GM10248 (cell line): ENCODE measurements at regions of chr16 and their contacts with region 1.

Region 1: GRCh38 chr16:47037746-47038458 is 64.4 kb upstream of the DNAJA2 start:
- DNase-seq: peak; percentile 95
- CTCF ChIP-seq: peak; percentile 96

Region 2: DNA sequence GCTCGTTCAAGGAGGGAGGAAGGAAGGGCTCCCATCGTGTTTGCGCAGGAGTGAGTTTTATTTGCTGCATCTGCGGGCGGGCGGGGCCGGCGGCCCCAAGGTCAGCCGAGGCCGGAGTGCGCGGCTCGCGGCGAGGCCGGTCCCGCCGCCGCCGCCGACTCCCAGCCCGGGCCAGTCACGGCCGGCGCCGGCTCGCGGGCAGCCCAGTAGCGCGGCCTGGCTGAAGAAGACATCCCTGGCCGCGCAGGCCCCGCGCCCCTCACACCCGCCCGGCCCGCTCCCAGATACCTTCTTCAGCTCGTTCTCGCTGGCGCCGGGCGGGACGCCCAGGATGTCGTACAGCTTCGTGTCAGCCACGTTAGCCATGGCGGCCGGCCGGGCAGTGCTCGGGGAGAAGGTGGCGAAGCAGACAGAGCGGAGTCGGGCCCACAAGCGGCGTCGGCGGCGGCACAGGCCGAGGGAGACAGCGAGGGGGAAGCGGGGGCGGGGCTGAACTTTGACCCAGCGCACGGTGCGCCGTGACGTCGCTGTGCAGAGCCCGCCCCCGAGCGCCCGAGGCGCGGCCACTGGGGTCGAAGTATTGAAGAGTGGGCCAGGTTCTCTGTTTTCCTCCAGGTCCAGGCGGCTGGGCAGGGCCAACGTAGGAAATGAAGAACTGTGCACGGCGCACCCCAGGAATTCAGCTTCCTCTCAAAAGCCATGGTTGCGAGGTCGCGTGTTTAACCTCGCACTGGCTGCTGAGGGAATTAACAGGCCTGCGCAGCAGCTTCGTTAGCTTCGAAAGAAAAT is 64.5 kb before region 1 on chr16 and contains the start of gene DNAJA2:
- CTCF ChIA-PET with region 1: interaction called, 12 read pairs
- POLR2A ChIA-PET with region 1: no interaction called
- DNase-seq: peak; percentile 93
- CTCF ChIP-seq: no peak

Region 3: GRCh38 chr16:47073223-47074155 is 35.6 kb after region 1 on chr16:
- CTCF ChIA-PET with region 1: interaction called, 14 read pairs
- POLR2A ChIA-PET with region 1: no interaction called
- DNase-seq: no peak
- CTCF ChIP-seq: no peak

Region 4: DNA sequence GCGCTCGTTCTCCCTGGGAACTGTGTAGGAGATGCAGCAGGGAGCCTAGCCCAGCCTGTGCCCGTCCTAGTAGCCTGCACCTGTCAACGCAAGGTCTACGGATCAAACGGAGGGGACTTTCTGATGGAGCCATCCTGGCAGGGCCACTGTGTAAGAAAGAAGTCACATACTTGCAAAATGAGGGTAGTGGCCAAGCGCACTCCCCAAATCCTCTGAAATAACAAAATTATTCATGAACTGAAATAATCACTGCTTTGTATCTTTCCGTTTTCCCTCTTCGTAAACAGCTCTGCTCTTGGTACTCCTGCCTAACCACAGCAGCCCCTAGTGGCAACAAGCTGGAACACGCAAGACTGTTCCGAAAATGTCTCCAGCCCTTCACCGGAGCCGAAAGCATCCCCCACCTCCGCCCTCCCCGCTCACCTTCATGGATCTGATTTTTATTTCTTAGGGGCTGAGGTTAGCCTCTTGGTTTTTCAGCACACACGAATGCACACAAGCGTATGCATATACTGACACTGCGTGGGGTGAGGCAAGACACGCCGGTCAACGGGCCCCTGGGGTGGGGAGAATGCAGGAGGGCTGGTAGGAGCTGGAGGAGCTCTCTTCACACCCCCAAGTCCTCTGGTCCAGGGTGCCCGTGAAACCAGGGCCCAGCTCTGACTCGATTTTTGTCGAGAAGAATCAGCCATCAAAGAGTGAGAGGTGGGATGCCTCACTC is 1017.1 kb after region 1 on chr16:
- CTCF ChIA-PET with region 1: interaction called, 10 read pairs
- POLR2A ChIA-PET with region 1: no interaction called
- DNase-seq: peak; percentile 69
- CTCF ChIP-seq: peak; percentile 94

Region 5: DNA sequence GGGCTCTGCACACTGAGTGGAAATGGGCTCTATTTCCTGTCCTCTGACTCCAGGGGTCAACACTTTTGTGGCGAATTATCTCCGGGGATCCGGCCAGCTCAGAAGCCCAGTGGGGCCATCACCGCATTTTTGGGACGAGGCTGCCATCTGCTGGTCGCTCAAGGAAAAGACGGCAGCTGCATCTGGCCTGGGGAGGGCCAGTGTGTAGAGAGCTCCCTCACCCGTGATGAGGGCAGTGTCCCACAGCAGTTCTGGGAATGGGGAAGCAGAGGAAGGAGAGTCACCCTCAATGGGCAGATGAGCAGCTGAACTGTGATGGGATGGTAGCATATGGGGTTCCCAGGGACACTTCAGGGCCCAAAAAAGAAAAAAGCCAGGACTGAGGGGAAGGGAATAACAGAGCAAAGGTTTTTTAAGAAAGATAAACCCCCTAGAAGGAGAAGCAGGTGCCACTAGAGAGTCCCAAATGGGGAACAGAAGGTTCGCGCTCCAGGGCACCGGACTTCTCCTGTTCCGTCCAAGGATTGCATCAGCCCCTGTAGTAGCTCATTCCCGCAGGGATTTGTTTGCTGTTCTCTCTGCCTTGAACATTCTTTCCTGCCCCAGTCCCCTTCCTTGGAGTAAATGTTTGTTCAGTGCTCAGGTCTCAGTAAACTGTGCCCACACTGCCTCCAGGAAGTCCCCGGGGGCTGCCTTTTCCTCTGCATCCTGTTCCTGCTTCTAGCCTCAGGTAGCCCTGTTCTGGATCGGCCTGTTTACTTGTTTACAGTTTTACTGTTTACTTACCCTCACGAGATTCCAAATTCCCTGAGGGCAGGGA is 1127.2 kb after region 1 on chr16:
- CTCF ChIA-PET with region 1: interaction called, 14 read pairs
- POLR2A ChIA-PET with region 1: no interaction called
- DNase-seq: peak; percentile 83
- CTCF ChIP-seq: peak; percentile 95